AG04449 (cell line): ENCODE measurements at regions of chr7 and their contacts with region 1.

Region 1: DNA sequence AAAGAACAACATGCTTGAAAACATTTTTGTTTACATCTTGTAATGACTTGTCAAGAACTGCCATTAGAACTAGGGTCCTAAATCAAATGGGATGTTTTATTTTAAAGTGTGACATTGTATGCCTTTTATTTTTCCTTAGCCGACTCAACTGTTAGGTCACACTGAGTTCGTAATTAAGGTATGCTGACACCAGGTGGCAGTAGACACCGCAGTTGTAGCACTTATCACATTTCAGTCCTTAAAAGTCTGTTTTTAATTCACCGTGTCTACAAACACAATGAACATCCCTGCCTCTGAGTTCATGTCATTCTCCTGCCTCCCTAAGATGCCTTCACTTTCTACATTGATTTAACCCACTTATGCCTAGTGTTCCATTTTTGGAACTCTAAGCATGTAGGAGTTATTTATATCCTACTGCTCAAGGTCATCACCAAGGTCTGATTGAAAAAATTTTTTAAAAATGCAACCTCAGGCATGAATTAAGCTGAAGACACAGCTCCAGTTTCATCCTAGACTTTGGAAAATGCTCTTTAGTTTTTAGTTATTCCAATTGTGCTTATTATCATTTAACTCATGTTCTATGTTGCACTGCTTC is 186.1 kb downstream of the BMPER start:
- DNase-seq: no peak
- H3K4me3 ChIP-seq: no peak overlapping the region
- CTCF ChIP-seq: peak; percentile 50

Region 2: DNA sequence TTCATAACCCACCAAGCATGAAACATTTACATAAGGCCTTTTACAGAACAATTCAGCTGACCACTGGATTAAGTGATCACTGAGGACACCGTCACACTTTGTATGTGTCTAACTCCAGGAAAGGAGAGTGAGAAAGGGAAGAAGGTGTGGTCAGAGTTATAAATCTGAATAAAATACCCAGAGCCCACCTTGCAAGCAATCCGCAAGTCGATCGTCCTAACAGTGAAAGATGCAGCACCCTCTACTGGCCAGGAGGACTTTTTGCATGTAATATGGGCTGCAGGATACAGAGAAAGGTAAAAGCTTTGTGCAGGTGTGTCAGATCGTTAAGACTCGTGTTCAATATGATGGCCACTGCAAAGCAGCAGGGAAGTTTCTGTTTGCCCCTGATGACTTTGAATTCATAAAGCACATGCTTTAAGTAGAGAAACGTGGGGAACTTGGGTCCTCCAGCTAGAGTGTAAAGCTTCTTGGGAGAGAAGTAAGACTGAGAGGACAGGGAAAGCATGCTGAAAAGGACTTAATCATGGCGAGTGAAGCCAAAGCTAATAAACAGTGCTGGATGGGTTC is 254.5 kb before region 1 on chr7:
- CTCF ChIA-PET with region 1: no interaction called
- POLR2A ChIA-PET with region 1: no interaction called
- DNase-seq: no peak
- H3K4me3 ChIP-seq: no peak overlapping the region
- CTCF ChIP-seq: no peak

Region 3: GRCh38 chr7:33986941-33987588 is 104.4 kb before region 1 on chr7:
- CTCF ChIA-PET with region 1: interaction called, 84 read pairs
- POLR2A ChIA-PET with region 1: interaction called, 5 read pairs
- DNase-seq: peak; percentile 96
- H3K4me3 ChIP-seq: no peak overlapping the region
- CTCF ChIP-seq: no peak

Region 4: DNA sequence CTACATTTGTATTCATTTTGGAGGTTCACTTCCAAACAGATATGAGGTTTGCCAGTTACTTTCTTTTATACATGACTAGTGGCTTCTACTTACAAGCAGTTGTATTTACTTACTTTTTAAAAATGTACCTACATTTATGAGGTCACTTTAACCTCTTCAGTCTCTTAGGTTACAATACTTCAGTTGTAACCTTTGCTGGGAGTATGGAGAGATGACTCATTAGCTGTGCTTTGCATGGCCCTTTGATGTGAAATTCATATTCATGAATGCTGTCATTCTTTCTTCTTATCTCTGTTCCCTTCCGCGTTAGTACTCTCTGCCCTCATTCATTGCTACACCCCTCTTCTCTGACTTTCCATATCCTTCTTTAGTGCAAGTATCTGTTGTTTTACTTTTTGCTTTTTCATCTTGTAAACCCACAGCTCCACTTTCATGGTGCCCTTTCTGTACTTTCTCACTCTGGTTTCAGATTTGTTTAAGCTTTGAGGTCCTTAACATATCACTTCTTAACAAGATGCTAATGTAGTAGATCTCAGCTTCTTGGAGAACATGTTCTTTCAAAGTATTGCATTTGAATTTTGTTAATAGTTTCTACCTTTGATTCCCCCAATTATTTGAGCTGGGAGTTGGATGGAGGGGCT is 21.7 kb before region 1 on chr7:
- CTCF ChIA-PET with region 1: interaction called, 38 read pairs
- POLR2A ChIA-PET with region 1: no interaction called
- DNase-seq: no peak
- H3K4me3 ChIP-seq: no peak overlapping the region
- CTCF ChIP-seq: no peak

Region 5: GRCh38 chr7:34133983-34134782 is 42.8 kb after region 1 on chr7:
- CTCF ChIA-PET with region 1: interaction called, 16 read pairs
- POLR2A ChIA-PET with region 1: no interaction called
- DNase-seq: no peak
- H3K4me3 ChIP-seq: no peak overlapping the region
- CTCF ChIP-seq: peak; percentile 76

Region 6: DNA sequence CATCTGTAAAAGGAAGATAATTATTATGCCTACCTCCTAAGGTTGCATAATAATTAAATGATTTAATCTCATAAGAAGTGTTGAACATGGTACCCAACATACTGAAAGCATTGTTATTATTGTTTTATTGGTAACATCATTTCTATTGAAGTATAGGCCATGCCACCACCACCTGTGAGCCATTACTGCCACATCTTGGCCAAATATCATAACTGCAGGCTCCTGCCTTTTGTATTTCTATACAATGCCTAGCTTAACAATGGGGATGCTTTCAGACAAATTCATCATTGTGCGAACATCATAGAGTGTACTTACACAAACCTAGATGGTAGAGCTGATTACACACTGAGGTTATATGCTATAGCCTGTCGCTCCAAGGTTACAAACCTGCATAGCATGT is 505.5 kb after region 1 on chr7:
- CTCF ChIA-PET with region 1: interaction called, 15 read pairs
- POLR2A ChIA-PET with region 1: no interaction called
- DNase-seq: no peak
- H3K4me3 ChIP-seq: no peak overlapping the region
- CTCF ChIP-seq: peak; percentile 5